T-cell (primary cell): ENCODE measurements at regions of chr15 and their contacts with region 1.

Region 1: GRCh38 chr15:52728899-52729298 is 49.7 kb upstream of the ATOSA start:
- DNase-seq: no peak
- ATAC-seq: no peak
- H3K4me3 ChIP-seq: no peak overlapping the region
- H3K4me3 Mint-ChIP-seq: no peak overlapping the region
- H3K27ac ChIP-seq: no peak overlapping the region
- H3K27ac Mint-ChIP-seq: no peak overlapping the region
- H3K4me1 ChIP-seq: peaks cover 9 to 15% of the 10 kb centered on the region in 2 experiments
- H3K4me1 Mint-ChIP-seq: peaks cover 13 to 24% (median 21%) of the 10 kb centered on the region in 3 donors
- H3K27me3 ChIP-seq: no peaks in the 10 kb centered on the region
- H3K27me3 Mint-ChIP-seq: no peaks in the 10 kb centered on the region

Region 2: DNA sequence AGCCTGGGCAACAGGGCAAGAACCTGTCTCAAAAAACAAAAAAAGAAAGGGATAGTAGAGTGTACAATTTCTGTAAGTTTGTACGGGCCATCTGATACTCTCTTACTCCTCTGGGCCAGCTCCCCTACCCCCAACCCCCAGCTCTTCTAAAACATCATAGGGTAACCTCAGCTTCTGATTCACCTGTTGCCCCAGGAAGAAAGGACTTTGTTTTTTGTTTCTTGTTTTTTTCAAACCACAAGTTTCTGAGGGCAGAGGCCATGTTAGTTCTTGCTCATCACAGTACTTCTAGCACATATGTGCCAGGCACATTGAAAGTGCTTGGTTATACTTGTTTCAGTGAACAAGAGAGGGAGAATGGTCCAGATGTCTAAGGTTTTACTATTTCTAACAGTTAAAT is 69.9 kb before region 1 on chr15:
- CTCF ChIA-PET with region 1: no interaction called
- POLR2A ChIA-PET with region 1: interaction called in 1 of 2 experiments, 13 read pairs
- DNase-seq: peak in 11 of 35 experiments; percentile 2 to 45 (median 15)
- ATAC-seq: peak; percentile 70 to 94 (median 80)
- H3K4me3 ChIP-seq: no peak overlapping the region
- H3K4me3 Mint-ChIP-seq: no peak overlapping the region
- H3K27ac ChIP-seq: no peak overlapping the region
- H3K27ac Mint-ChIP-seq: peak overlapping the region; percentile 75 to 79
- H3K4me1 ChIP-seq: peaks cover 0 to 7% of the 10 kb centered on the region in 2 experiments
- H3K4me1 Mint-ChIP-seq: peaks cover 28 to 48% (median 40%) of the 10 kb centered on the region in 3 donors
- H3K27me3 ChIP-seq: no peaks in the 10 kb centered on the region
- H3K27me3 Mint-ChIP-seq: no peaks in the 10 kb centered on the region

Region 3: GRCh38 chr15:52857937-52858781 is 129.3 kb after region 1 on chr15:
- CTCF ChIA-PET with region 1: no interaction called
- POLR2A ChIA-PET with region 1: no interaction called
- DNase-seq: no peak
- ATAC-seq: no peak
- H3K4me3 ChIP-seq: no peak overlapping the region
- H3K4me3 Mint-ChIP-seq: no peak overlapping the region
- H3K27ac ChIP-seq: no peak overlapping the region
- H3K27ac Mint-ChIP-seq: no peak overlapping the region
- H3K4me1 ChIP-seq: no peaks in the 10 kb centered on the region
- H3K4me1 Mint-ChIP-seq: no peaks in the 10 kb centered on the region
- H3K27me3 ChIP-seq: peaks cover 8 to 27% of the 10 kb centered on the region in 2 experiments
- H3K27me3 Mint-ChIP-seq: peaks cover 12% of the 10 kb centered on the region in 2 donors